Activated CD4-positive, alpha-beta T cell treated with anti-CD3 and anti-CD28 coated beads for 36 hours (primary cell): ENCODE measurements at regions of chr19 and their contacts with region 1.

Region 1: DNA sequence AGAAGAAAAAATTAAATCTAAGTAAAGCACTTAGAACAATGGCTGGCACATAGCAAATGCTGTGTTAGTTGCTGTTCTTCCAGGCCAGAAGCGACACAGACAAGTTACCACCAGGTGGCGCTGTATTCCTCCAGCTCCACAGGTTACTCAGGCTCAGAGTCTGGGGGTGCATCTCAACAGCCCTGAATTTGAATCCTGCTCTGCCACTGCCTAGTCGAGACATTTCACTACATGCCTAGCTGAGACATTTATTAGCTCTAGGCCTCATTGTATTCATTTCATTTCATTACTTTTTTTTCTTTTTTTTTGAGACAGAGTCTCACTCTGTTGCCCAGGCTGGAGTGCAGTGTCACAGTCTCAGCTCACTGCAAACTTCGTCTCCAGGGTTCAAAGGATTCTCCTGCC is 16.4 kb upstream of the CYP2B6 start:
- DNase-seq: peak; percentile 88
- ATAC-seq: peak; percentile 68
- H3K4me3 Mint-ChIP-seq: no peak overlapping the region
- H3K27ac Mint-ChIP-seq: no peak overlapping the region
- H3K4me1 Mint-ChIP-seq: peaks cover 20% of the 10 kb centered on the region
- H3K27me3 Mint-ChIP-seq: peaks cover 9% of the 10 kb centered on the region

Region 2: DNA sequence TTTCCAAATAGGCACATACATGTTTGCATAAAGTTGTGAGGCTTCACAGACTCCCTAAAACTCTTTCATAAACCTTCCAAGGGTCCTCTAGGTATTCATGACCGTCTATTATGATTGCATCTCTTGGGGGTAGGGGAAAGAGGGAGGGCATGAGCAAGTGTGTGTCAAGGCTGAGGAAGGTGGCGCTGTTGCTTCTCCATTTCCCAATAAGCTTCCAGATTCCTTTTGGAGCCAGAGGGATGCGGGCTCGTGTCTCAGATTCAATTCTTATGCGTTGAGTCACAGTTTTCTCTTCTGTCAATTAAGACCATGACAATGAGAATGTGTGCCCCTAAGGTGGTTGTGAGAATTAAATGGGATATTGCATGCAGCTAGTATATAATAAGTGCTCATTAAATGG is 41.6 kb before region 1 on chr19:
- CTCF ChIA-PET with region 1: no interaction called
- POLR2A ChIA-PET with region 1: no interaction called
- intact Hi-C with region 1: loop called in 1 of 2 experiments (anchors 2 kb)
- DNase-seq: no peak
- ATAC-seq: no peak
- H3K4me3 Mint-ChIP-seq: no peak overlapping the region
- H3K27ac Mint-ChIP-seq: no peak overlapping the region
- H3K4me1 Mint-ChIP-seq: no peaks in the 10 kb centered on the region
- H3K27me3 Mint-ChIP-seq: peaks cover 13% of the 10 kb centered on the region